ENCODE measurements at regions of chr12 and their contacts with region 1.

Region 1: GRCh38 chr12:82029936-82030335 is 270.8 kb upstream of the PPFIA2 start:
- DNase-seq: no peak
- ATAC-seq: no peak
- H3K4me3 ChIP-seq: no peak overlapping the region
- H3K27ac ChIP-seq: no peak overlapping the region
- H3K4me1 ChIP-seq: no peaks in the 10 kb centered on the region
- H3K27me3 ChIP-seq: no peaks in the 10 kb centered on the region
- CTCF ChIP-seq: no peak
- POLR2A ChIP-seq: no peak

Region 2: DNA sequence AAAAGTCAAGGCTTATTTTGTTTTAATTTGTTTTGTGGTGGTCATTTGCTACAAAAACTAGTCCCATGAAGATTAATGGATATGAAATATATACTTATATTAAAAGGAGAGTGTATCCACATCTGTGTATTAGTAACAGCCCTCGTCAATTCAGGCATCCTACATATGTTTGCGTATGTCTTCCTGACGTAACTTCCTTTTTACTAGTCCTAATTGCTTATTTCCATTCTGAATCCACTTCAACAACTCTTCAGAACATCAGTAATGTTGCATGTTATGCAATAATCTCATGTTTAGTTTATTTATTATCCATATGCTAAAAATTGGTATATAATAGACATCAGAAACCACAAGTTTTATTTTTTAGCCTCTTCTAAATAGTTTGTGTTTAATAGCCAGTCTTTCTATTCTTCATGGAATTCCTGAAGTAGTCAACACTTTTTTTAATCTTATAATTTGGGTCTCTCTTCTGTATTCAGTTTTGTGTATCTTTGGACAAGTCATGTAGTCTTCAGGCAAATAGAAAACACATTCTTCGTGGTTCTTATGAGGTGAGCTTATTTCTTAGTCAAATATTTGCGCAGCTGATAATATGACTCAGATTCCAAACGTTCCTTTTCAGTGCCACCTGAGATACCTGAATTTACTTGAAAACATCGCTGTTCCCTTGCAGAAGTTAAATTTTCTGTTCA is 59.6 kb after region 1 on chr12:
- in situ Hi-C with region 1: no loop called
- intact Hi-C with region 1: no loop called
- DNase-seq: no peak
- ATAC-seq: no peak
- H3K4me3 ChIP-seq: no peak overlapping the region
- H3K27ac ChIP-seq: no peak overlapping the region
- H3K4me1 ChIP-seq: no peaks in the 10 kb centered on the region
- H3K27me3 ChIP-seq: no peaks in the 10 kb centered on the region
- CTCF ChIP-seq: no peak
- POLR2A ChIP-seq: no peak

Region 3: DNA sequence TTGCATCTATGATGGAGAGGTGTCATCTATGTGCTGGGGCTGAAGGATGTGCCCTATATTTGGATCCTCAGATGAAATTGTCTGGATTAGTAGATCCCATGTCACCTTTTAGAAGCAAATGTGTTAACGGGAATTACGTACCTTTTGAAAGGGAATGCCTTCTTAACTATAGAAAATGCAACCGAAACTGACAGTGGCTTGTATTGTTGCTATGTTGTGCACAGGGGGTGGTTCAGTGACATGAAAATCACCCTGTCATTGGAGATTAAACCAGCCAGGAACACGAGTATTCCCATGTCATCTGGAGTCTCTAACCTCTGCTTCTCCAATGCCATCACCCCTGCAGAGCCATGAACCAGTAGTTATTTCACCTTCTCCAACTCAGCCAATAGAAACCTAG is 438.6 kb after region 1 on chr12:
- in situ Hi-C with region 1: no loop called
- intact Hi-C with region 1: loop called (anchors 5 kb)
- DNase-seq: no peak
- ATAC-seq: no peak
- H3K4me3 ChIP-seq: no peak overlapping the region
- H3K27ac ChIP-seq: no peak overlapping the region
- H3K4me1 ChIP-seq: no peaks in the 10 kb centered on the region
- H3K27me3 ChIP-seq: no peaks in the 10 kb centered on the region
- CTCF ChIP-seq: no peak
- POLR2A ChIP-seq: no peak